ENCODE measurements at regions of chr4 and their contacts with region 1.

Region 1: DNA sequence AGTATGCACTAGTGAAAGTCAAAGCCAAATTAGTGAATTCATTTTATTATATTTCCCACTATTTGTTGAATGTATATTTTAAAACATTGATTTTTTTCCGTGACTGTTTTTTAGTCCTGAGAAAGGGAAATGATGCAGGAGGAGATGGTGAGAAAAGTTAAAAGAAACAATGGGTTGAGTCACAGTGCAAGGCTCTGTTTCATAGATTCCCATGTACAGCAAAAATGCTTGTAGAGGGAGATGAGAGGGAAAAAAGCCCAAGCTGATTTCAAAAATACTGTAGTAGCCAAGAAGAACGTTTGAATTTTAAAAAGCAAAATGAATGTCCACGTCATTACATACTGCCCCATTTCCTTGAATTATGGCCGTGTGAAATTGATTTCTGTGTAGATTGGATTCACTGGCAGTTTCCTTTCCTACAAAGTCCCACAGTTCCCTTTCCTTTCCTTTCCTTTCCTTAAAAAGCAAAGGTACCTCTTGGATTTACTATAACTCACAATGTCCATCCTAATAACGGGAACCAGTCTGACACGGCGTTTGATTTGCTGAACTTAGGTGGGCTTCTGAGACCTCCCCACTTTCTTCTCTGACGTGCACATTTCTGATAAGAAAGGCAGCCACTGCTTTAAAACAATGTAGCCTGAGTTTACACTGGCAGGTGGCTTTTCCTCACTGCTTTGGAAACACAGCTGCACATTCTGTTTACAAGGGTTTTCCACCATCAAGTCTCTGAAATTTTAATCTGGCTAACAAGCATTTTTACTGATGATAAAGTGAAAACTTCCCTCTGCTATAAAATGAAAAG is 63.7 kb downstream of the SPCS3 start:
- DNase-seq: peak in 1 of 2 donors; percentile 29
- ATAC-seq: peak in 6 of 8 donors; percentile 38 to 81 (median 68)
- H3K4me3 ChIP-seq: peak overlapping the region in 6 of 10 donors; percentile 6 to 31 (median 13)
- H3K27ac ChIP-seq: peak overlapping the region in 7 of 10 donors; percentile 3 to 78 (median 69)
- H3K4me1 ChIP-seq: peaks cover 0 to 22% (median 0%) of the 10 kb centered on the region in 9 donors
- H3K27me3 ChIP-seq: no peaks in the 10 kb centered on the region
- CTCF ChIP-seq: no peak

Region 2: GRCh38 chr4:175784986-175785525 is 598.4 kb before region 1 on chr4:
- intact Hi-C with region 1: no loop called
- DNase-seq: no peak
- ATAC-seq: no peak
- H3K4me3 ChIP-seq: no peak overlapping the region
- H3K27ac ChIP-seq: no peak overlapping the region
- H3K4me1 ChIP-seq: no peaks in the 10 kb centered on the region
- H3K27me3 ChIP-seq: no peaks in the 10 kb centered on the region
- CTCF ChIP-seq: no peak

Region 3: GRCh38 chr4:176217510-176217909 is 166.0 kb before region 1 on chr4:
- intact Hi-C with region 1: no loop called
- DNase-seq: no peak
- ATAC-seq: no peak
- H3K4me3 ChIP-seq: no peak overlapping the region
- H3K27ac ChIP-seq: no peak overlapping the region
- H3K4me1 ChIP-seq: no peaks in the 10 kb centered on the region
- H3K27me3 ChIP-seq: no peaks in the 10 kb centered on the region
- CTCF ChIP-seq: no peak

Region 4: GRCh38 chr4:176492646-176493302 is 109.3 kb after region 1 on chr4:
- intact Hi-C with region 1: loop called in 2 of 10 experiments (anchors 5 to 10 kb)
- DNase-seq: no peak
- ATAC-seq: peak in 6 of 8 donors; percentile 71 to 92 (median 83)
- H3K4me3 ChIP-seq: peak overlapping the region in 1 of 10 donors; percentile 12
- H3K27ac ChIP-seq: peak overlapping the region in 8 of 10 donors; percentile 6 to 77 (median 60)
- H3K4me1 ChIP-seq: peaks cover 0 to 8% (median 0%) of the 10 kb centered on the region in 9 donors
- H3K27me3 ChIP-seq: no peaks in the 10 kb centered on the region
- CTCF ChIP-seq: no peak

Region 5: GRCh38 chr4:176538217-176538925 is 154.9 kb after region 1 on chr4:
- intact Hi-C with region 1: loop called in 2 of 10 experiments (anchors 10 kb)
- DNase-seq: no peak
- ATAC-seq: peak in 6 of 8 donors; percentile 20 to 82 (median 68)
- H3K4me3 ChIP-seq: no peak overlapping the region
- H3K27ac ChIP-seq: peak overlapping the region in 8 of 10 donors; percentile 27 to 82 (median 62)
- H3K4me1 ChIP-seq: peaks cover 0 to 33% (median 0%) of the 10 kb centered on the region in 9 donors
- H3K27me3 ChIP-seq: no peaks in the 10 kb centered on the region
- CTCF ChIP-seq: no peak

Region 6: GRCh38 chr4:176635372-176636261 is 252.1 kb after region 1 on chr4:
- intact Hi-C with region 1: loop called in 1 of 10 experiments (anchors 10 kb)
- DNase-seq: peak in 1 of 2 donors; percentile 36
- ATAC-seq: peak in 7 of 8 donors; percentile 42 to 96 (median 84)
- H3K4me3 ChIP-seq: no peak overlapping the region
- H3K27ac ChIP-seq: peak overlapping the region in 8 of 10 donors; percentile 6 to 68 (median 53)
- H3K4me1 ChIP-seq: peaks cover 0 to 17% (median 4%) of the 10 kb centered on the region in 9 donors
- H3K27me3 ChIP-seq: no peaks in the 10 kb centered on the region
- CTCF ChIP-seq: peak in 1 of 9 donors; percentile 18

Region 7: GRCh38 chr4:176671532-176671931 is 288.1 kb after region 1 on chr4:
- intact Hi-C with region 1: no loop called
- DNase-seq: peak in 1 of 2 donors; percentile 13
- ATAC-seq: peak in 7 of 8 donors; percentile 26 to 95 (median 72)
- H3K4me3 ChIP-seq: peak overlapping the region in 1 of 10 donors; percentile 11
- H3K27ac ChIP-seq: peak overlapping the region in 3 of 10 donors; percentile 19 to 56 (median 46)
- H3K4me1 ChIP-seq: peaks cover 0 to 17% (median 0%) of the 10 kb centered on the region in 9 donors
- H3K27me3 ChIP-seq: no peaks in the 10 kb centered on the region
- CTCF ChIP-seq: no peak

Region 8: GRCh38 chr4:176708771-176709311 is 325.4 kb after region 1 on chr4:
- intact Hi-C with region 1: no loop called
- DNase-seq: no peak
- ATAC-seq: no peak
- H3K4me3 ChIP-seq: no peak overlapping the region
- H3K27ac ChIP-seq: peak overlapping the region in 1 of 10 donors; percentile 57
- H3K4me1 ChIP-seq: peaks cover 0 to 13% (median 0%) of the 10 kb centered on the region in 9 donors
- H3K27me3 ChIP-seq: no peaks in the 10 kb centered on the region
- CTCF ChIP-seq: no peak